ENCODE measurements at regions of chr5 and their contacts with region 1.

Region 1: DNA sequence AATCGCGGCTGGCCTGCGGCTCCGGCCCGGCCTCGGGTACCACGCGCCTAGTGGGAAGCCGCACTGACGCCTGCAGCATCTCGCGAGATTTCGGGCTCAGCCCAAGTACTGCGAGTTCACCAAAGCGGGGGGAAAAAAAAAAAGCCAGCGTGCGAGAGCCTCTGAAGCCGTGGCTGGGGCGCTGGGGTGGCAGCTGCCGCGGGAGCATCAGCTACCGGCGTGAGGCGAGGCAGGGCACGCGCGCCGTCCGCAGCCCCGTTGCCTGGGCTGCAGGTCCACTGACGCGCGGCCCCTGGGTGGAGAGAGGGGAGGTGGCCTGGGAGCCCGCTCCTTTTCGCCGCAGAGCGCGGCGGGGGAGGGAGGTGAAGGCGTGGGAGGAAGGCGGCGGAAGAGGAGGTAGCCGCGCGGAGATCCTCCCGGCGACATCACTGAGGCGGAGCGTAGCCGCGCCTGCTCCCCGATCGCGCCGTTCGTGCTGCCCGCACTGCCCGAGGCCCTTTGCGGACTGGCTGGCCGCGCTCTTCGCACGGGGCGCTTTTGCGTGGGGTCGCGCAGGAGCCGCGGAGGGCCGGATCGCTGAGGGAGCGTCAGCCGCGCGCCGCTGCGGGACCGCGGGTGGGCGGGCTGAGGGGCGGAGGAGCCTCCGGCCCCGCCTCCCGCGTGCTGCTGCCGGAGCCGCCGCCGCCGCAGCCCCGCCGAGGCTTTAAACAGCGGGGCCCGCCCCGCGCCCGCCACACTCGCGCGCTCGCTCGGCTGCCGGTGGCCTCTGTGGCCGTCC is at the start of gene SLC12A2:
- DNase-seq: peak; percentile 97
- H3K4me3 Mint-ChIP-seq: peak within 1 kb of the TSS; percentile 93
- H3K27ac Mint-ChIP-seq: peak within 1 kb of the TSS; percentile 98
- H3K4me1 Mint-ChIP-seq: peaks cover 54% of the 10 kb centered on the region
- H3K27me3 Mint-ChIP-seq: no peaks in the 10 kb centered on the region
- total RNA-seq, gene SLC12A2: 24.4 and 24.5 TPM in 2 replicates

Region 2: DNA sequence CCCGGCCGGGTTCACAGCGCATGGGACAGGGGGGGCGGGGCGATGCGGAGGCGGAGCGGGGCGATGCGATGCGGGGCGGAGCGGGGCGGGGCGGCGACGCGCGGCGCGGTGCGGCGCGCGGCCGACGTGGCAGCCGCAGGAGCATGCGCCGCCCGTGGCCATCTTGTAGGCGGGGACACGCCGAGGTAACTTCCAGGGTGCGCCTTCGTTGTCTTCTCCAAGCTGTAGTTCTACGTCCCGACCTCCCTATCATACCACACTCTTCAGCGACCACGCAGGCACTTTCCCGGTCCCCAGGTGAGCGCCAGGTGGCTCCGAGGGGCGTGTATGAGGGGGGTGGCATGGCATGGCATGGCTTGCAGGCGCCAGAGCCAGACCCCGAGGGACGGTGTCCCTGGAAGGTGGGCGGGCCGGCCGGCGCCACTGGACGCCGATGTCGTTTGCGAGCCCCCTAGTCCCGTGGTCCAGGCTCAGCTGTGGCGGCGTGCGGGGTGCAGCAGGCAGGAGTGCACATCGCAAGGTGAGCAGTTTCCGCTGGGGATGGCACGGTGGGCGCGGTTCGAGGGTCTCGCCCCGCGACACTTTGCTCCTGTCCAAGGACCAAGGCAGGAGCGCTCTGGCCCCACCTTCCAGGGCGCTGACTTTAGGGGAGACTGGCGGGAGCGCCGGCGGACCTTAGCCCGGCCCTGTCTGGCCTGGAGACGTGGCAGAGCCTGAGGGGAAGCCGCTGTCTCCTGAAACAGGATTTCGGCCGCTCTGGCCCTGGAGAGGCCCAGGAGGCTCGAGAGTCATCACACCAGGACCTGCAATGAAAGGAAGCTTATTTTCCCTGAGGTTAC is 565.5 kb before region 1 on chr5 and contains the start of gene PRRC1:
- intact Hi-C with region 1: loop called (anchors 1 kb)
- DNase-seq: peak; percentile 94
- H3K4me3 Mint-ChIP-seq: peak within 1 kb of the TSS; percentile 86
- H3K27ac Mint-ChIP-seq: peak within 1 kb of the TSS; percentile 84
- H3K4me1 Mint-ChIP-seq: peaks cover 25% of the 10 kb centered on the region
- H3K27me3 Mint-ChIP-seq: peaks cover 13% of the 10 kb centered on the region
- total RNA-seq, gene PRRC1: 50.4 and 52.3 TPM in 2 replicates

Region 3: GRCh38 chr5:127757576-127757975 is 325.6 kb before region 1 on chr5:
- intact Hi-C with region 1: loop called (anchors 2 kb)
- DNase-seq: peak; percentile 79
- H3K4me3 Mint-ChIP-seq: no peak overlapping the region
- H3K27ac Mint-ChIP-seq: no peak overlapping the region
- H3K4me1 Mint-ChIP-seq: no peaks in the 10 kb centered on the region
- H3K27me3 Mint-ChIP-seq: peaks cover 11% of the 10 kb centered on the region

Region 4: GRCh38 chr5:127909078-127909477 is 174.1 kb before region 1 on chr5:
- intact Hi-C with region 1: loop called (anchors 5 kb)
- DNase-seq: peak; percentile 62
- H3K4me3 Mint-ChIP-seq: no peak overlapping the region
- H3K27ac Mint-ChIP-seq: no peak overlapping the region
- H3K4me1 Mint-ChIP-seq: peaks cover 5% of the 10 kb centered on the region
- H3K27me3 Mint-ChIP-seq: peaks cover 13% of the 10 kb centered on the region

Region 5: DNA sequence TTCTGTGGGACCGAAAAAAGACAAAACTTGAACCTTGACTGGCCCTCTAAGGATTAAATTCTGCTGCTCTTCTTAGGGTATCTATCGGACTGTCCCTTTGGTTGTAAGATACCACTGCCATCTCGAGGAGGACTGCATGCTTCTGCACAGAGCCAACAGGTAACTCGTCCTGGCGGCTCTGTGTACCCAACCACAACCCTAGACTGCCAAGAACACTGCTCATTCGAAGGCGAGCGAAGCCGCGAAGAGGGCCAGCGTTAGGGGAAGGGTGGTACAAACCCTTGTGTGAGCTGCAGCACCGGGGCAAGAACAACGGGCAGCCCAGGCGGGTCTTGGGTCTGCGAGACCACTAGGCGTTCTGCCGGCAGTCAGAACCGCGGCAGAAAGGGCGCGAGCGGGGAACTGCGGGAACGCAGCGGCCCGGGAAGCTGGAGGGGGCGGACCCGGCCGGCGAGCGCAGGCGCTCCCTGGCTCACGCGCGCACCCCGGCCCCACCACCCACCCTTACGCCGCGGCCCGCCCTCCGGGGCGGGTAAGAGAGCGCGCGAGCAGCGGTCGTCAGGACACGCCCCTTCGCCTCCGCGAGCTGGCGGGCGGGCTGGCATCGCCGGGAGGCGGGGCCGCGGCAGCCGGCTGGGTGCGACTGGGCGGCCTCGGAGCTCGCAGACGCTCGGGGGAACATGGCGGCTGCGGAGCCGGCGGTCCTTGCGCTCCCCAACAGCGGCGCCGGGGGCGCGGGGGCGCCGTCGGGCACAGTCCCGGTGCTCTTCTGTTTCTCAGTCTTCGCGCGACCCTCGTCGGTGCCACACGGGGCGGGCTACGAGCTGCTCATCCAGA is 1011.1 kb after region 1 on chr5 and contains the start of gene ISOC1:
- intact Hi-C with region 1: loop called (anchors 5 kb)
- DNase-seq: peak; percentile 98
- H3K4me3 Mint-ChIP-seq: peak within 1 kb of the TSS; percentile 86
- H3K27ac Mint-ChIP-seq: peak within 1 kb of the TSS; percentile 63
- H3K4me1 Mint-ChIP-seq: peaks cover 25% of the 10 kb centered on the region
- H3K27me3 Mint-ChIP-seq: peaks cover 22% of the 10 kb centered on the region
- total RNA-seq, gene ISOC1: 29.4 and 31.6 TPM in 2 replicates

Measured in activated CD4-positive, alpha-beta T cell treated with anti-CD3 and anti-CD28 coated beads, Interleukin-2, amount 10 ng/mL, durations not matched to agents 24 days and 14 days (primary cell).